Naive thymus-derived CD4-positive, alpha-beta T cell (primary cell): ENCODE measurements at regions of chr3 and their contacts with region 1.

Region 1: DNA sequence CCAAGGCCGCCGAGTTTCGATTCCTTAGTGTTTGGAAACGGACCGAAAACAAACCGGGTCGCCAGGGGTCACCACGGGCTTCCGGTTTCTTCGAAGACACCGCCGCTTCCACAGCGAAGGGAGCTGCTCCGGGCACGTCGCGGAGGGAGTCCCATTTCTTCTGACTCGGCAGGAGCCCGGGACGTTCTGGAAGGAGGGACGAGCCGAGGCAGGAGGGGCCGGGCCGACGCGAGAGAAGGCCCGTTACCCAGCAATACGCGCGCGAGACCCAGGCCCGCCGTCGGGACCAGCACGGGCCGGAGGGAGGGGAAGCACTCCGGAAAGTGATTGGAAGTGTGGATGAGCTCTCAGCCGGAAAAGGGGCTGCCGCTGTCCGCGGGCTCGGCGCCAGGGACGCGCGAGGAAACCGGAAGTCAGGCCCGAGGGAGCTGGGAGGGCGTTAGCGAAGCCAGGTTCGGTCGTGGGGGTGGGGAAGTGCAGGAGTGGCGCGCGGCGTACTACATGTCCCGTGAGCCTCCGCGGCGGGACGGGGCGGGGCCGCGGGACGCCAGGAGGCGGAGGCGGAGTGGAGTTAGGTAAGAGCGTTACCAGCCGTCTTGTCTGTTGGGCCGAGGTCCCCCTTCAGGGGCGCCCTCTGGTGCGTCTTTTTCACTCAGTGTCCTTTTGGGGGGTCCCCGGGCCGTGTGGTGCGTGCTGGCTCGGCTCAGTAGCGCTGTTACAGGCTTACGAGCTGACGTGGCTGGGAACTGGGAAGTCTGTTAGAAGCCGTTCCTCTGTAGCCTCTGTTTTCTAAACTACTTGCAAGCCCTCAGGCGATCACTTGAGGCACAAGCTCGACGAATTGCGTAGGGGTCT is at the starts of genes AZI2 and ZCWPW2:
- DNase-seq: peak; percentile 88 to 93 (median 92)
- ATAC-seq: peak; percentile 92
- H3K4me3 ChIP-seq: peak within 1 kb of the TSS; percentile 93
- H3K4me3 Mint-ChIP-seq: peak within 1 kb of the TSS; percentile 88 to 99 (median 94)
- H3K27ac ChIP-seq: peak within 1 kb of the TSS; percentile 92
- H3K27ac Mint-ChIP-seq: peak within 1 kb of the TSS; percentile 96 to 100 (median 98)
- H3K4me1 ChIP-seq: peaks cover 35 to 39% of the 10 kb centered on the region in 2 donors
- H3K4me1 Mint-ChIP-seq: peaks cover 30 to 70% (median 57%) of the 10 kb centered on the region in 7 donors
- H3K27me3 ChIP-seq: no peaks in the 10 kb centered on the region
- H3K27me3 Mint-ChIP-seq: no peaks in the 10 kb centered on the region
- total RNA-seq, gene AZI2: 39.7 to 54.0 (median 41.2) TPM
- total RNA-seq, gene ZCWPW2: 0.56 to 1.3 (median 0.81) TPM

Region 2: DNA sequence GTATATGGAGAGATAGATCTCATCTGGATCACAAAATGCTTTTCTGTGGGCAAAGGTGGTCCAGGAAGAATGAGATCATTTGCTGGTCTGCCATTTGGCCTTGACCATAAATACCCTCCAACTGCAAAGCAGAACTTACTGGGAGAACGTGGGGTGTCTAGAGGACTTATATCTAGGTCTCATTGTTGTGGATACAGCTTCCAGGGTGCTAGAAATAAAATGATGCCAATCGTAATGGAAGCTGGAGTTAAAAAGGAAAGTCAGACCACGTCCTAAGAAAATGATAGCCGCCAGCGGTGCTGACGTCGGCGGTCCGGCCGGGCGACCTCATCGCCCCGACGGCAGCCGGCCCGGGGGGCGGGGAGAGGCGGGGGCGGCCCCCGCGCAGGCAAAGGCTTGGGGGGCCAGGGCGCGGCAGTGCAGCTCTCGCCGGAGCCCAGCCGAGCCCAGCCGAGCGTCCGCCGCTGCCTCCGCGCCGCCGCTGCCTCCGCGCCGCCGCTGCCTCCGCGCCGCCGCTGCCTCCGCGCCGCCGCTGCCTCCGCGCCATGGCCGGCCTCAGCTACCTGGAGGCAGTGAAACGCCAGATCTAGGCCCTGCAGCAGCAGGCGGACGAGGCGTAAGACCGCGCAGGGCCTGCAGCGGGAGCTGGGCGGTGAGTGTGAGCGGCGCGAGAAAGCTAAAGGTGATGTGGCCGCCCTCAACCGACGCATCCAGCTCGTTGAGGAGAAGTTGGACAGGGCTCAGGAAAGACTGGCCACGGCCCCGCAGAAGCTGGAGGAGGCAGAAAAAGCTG is 716.2 kb before region 1 on chr3:
- CTCF ChIA-PET with region 1: no interaction called
- POLR2A ChIA-PET with region 1: no interaction called
- intact Hi-C with region 1: loop called in 1 of 2 experiments (anchors 2 kb)
- DNase-seq: peak; percentile 21 to 56 (median 44)
- ATAC-seq: peak; percentile 92
- H3K4me3 ChIP-seq: peak overlapping the region; percentile 77
- H3K4me3 Mint-ChIP-seq: peak overlapping the region; percentile 92 to 99 (median 95)
- H3K27ac ChIP-seq: peak overlapping the region; percentile 70
- H3K27ac Mint-ChIP-seq: peak overlapping the region; percentile 88 to 99 (median 93)
- H3K4me1 ChIP-seq: peaks cover 0 to 18% of the 10 kb centered on the region in 2 donors
- H3K4me1 Mint-ChIP-seq: peaks cover 11 to 31% (median 29%) of the 10 kb centered on the region in 7 donors
- H3K27me3 ChIP-seq: no peaks in the 10 kb centered on the region
- H3K27me3 Mint-ChIP-seq: no peaks in the 10 kb centered on the region

Region 3: DNA sequence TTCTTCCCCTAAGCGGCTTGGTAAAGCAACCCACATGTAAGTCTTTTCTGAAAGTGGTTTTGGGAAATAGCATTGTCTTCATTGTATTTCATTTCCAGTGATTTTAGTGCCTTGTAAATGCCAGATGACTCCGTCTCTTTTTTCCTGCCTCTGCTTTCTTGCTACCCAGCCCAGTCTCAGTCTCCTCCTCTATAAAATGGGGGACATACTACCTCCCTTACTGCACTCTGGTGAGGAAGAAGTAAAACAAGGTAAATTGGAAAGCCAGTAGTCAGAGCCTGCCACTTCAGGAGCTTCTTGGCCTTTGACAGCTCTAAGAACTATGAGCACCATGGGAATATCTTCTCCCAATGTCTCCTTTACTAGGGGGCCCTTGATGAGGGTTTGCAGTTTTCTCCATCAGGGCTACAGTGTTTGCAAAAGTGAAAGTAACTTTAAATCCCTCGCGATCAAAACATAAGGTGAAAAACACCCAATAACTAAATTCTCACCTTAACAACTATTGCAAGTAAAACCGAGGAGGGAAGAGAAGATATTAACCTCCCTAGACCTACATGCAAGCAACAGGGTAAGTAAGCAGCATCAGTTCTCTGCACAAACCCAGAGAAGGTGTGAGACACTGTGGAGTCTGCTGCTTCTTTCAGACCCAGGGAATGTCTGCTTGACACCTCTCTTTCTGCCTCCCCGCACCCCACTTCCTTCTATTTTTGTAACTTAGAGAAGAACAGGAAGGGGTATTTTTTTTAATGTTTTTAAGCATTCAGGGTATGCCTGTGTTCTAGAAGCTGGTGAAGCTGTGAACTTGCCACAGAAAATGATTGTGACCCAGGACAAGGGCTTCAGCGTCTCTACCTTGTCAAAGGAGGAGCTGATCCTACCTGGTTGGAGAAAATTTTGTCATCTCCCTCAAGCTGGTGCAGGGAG is 467.6 kb before region 1 on chr3:
- CTCF ChIA-PET with region 1: no interaction called
- POLR2A ChIA-PET with region 1: interaction called, 3 read pairs
- intact Hi-C with region 1: loop called (anchors 5 kb)
- DNase-seq: peak in 8 of 9 donors; percentile 24 to 75 (median 62)
- ATAC-seq: peak; percentile 87
- H3K4me3 ChIP-seq: peak overlapping the region; percentile 43
- H3K4me3 Mint-ChIP-seq: peak overlapping the region; percentile 82 to 94 (median 89)
- H3K27ac ChIP-seq: peak overlapping the region; percentile 75
- H3K27ac Mint-ChIP-seq: peak overlapping the region; percentile 91 to 99 (median 97)
- H3K4me1 ChIP-seq: peaks cover 28 to 47% of the 10 kb centered on the region in 2 donors
- H3K4me1 Mint-ChIP-seq: peaks cover 39 to 85% (median 73%) of the 10 kb centered on the region in 7 donors
- H3K27me3 ChIP-seq: no peaks in the 10 kb centered on the region
- H3K27me3 Mint-ChIP-seq: peaks cover 0 to 4% (median 0%) of the 10 kb centered on the region in 5 donors

Region 4: GRCh38 chr3:28241221-28242160 is 107.4 kb before region 1 on chr3 and contains the start of gene CMC1:
- CTCF ChIA-PET with region 1: no interaction called
- POLR2A ChIA-PET with region 1: interaction called, 4 read pairs
- intact Hi-C with region 1: loop called (anchors 1 kb)
- DNase-seq: peak; percentile 69 to 93 (median 83)
- ATAC-seq: peak; percentile 95
- H3K4me3 ChIP-seq: peak within 1 kb of the TSS; percentile 71
- H3K4me3 Mint-ChIP-seq: peak within 1 kb of the TSS; percentile 88 to 97 (median 96)
- H3K27ac ChIP-seq: peak within 1 kb of the TSS; percentile 71
- H3K27ac Mint-ChIP-seq: peak within 1 kb of the TSS; percentile 85 to 96 (median 94)
- H3K4me1 ChIP-seq: peaks cover 16 to 40% of the 10 kb centered on the region in 2 donors
- H3K4me1 Mint-ChIP-seq: peaks cover 32 to 77% (median 60%) of the 10 kb centered on the region in 7 donors
- H3K27me3 ChIP-seq: no peaks in the 10 kb centered on the region
- H3K27me3 Mint-ChIP-seq: no peaks in the 10 kb centered on the region
- total RNA-seq, gene CMC1: 11.0 to 25.1 (median 13.9) TPM

Region 5: GRCh38 chr3:28279770-28280169 is 69.1 kb before region 1 on chr3:
- CTCF ChIA-PET with region 1: no interaction called
- POLR2A ChIA-PET with region 1: no interaction called
- intact Hi-C with region 1: no loop called
- DNase-seq: no peak
- ATAC-seq: no peak
- H3K4me3 ChIP-seq: no peak overlapping the region
- H3K4me3 Mint-ChIP-seq: no peak overlapping the region
- H3K27ac ChIP-seq: no peak overlapping the region
- H3K27ac Mint-ChIP-seq: no peak overlapping the region
- H3K4me1 ChIP-seq: no peaks in the 10 kb centered on the region
- H3K4me1 Mint-ChIP-seq: peaks cover 3 to 22% (median 9%) of the 10 kb centered on the region in 7 donors
- H3K27me3 ChIP-seq: no peaks in the 10 kb centered on the region
- H3K27me3 Mint-ChIP-seq: no peaks in the 10 kb centered on the region

Region 6: GRCh38 chr3:29412110-29412509 is 1063.3 kb after region 1 on chr3:
- CTCF ChIA-PET with region 1: no interaction called
- POLR2A ChIA-PET with region 1: no interaction called
- intact Hi-C with region 1: no loop called
- DNase-seq: no peak
- ATAC-seq: no peak
- H3K4me3 ChIP-seq: no peak overlapping the region
- H3K4me3 Mint-ChIP-seq: no peak overlapping the region
- H3K27ac ChIP-seq: no peak overlapping the region
- H3K27ac Mint-ChIP-seq: no peak overlapping the region
- H3K4me1 ChIP-seq: no peaks in the 10 kb centered on the region
- H3K4me1 Mint-ChIP-seq: no peaks in the 10 kb centered on the region
- H3K27me3 ChIP-seq: no peaks in the 10 kb centered on the region
- H3K27me3 Mint-ChIP-seq: no peaks in the 10 kb centered on the region